Activated T-helper 1 cell treated with anti-CD3 and anti-CD28 coated beads, Interleukin-12 subunit alpha, Interleukin-12 subunit beta, Interleukin-2, Interleukin-4 antibody, amounts not matched to agents 30 ng/mL and 10 ng/mL and 1 ng/mL, durations not matched to agents 14 hours and 24 hours and 36 hours (primary cell): ENCODE measurements at regions of chr2 and their contacts with region 1.

Region 1: GRCh38 chr2:157443795-157444640 is at the start of gene CYTIP:
- DNase-seq: peak; percentile 73
- H3K4me3 Mint-ChIP-seq: peak within 1 kb of the TSS; percentile 98
- H3K27ac Mint-ChIP-seq: peak within 1 kb of the TSS; percentile 99
- H3K4me1 Mint-ChIP-seq: peaks cover 58% of the 10 kb centered on the region
- H3K27me3 Mint-ChIP-seq: no peaks in the 10 kb centered on the region
- total RNA-seq, gene CYTIP: 296 and 302 TPM in 2 replicates

Region 2: GRCh38 chr2:156400706-156401678 is 1043.0 kb before region 1 on chr2:
- intact Hi-C with region 1: loop called (anchors 10 kb)
- DNase-seq: peak; percentile 70
- H3K4me3 Mint-ChIP-seq: peak overlapping the region; percentile 95
- H3K27ac Mint-ChIP-seq: peak overlapping the region; percentile 91
- H3K4me1 Mint-ChIP-seq: peaks cover 37% of the 10 kb centered on the region
- H3K27me3 Mint-ChIP-seq: peaks cover 4% of the 10 kb centered on the region

Region 3: GRCh38 chr2:157404363-157404762 is 39.7 kb before region 1 on chr2:
- intact Hi-C with region 1: loop called (anchors 5 kb)
- DNase-seq: peak; percentile 62
- H3K4me3 Mint-ChIP-seq: peak overlapping the region; percentile 37
- H3K27ac Mint-ChIP-seq: peak overlapping the region; percentile 86
- H3K4me1 Mint-ChIP-seq: peaks cover 72% of the 10 kb centered on the region
- H3K27me3 Mint-ChIP-seq: no peaks in the 10 kb centered on the region

Region 4: GRCh38 chr2:157433394-157433793 is 10.6 kb before region 1 on chr2:
- intact Hi-C with region 1: loop called (anchors 1 kb)
- DNase-seq: no peak
- H3K4me3 Mint-ChIP-seq: peak overlapping the region; percentile 84
- H3K27ac Mint-ChIP-seq: peak overlapping the region; percentile 96
- H3K4me1 Mint-ChIP-seq: peaks cover 95% of the 10 kb centered on the region
- H3K27me3 Mint-ChIP-seq: no peaks in the 10 kb centered on the region

Region 5: GRCh38 chr2:157480182-157480961 is 36.4 kb after region 1 on chr2:
- intact Hi-C with region 1: loop called (anchors 1 kb)
- DNase-seq: peak; percentile 62
- H3K4me3 Mint-ChIP-seq: peak overlapping the region; percentile 83
- H3K27ac Mint-ChIP-seq: peak overlapping the region; percentile 99
- H3K4me1 Mint-ChIP-seq: peaks cover 95% of the 10 kb centered on the region
- H3K27me3 Mint-ChIP-seq: no peaks in the 10 kb centered on the region